Left lung (tissue), 14 donors: ENCODE measurements at regions of chr12 and their contacts with region 1.

Region 1: DNA sequence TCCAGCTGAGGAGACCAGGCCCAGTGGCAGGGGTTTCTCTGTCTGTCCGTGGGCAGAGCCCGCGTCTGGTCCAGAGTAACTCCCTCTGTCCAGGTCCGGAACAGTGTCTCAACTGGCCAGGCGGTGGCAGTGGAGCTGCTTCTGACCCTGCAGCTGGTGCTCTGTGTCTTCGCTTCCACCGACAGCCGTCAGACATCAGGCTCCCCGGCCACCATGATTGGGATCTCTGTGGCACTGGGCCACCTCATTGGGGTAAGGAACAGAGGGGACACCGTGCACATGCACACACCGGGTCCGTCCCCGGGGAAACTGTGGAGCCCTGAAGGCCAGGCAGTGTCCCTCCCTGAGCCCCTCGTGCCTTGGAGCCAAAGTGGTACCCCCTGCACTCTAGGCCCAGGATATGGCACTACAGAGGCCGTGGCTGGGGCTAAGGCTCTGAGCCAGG is 1.5 kb downstream of the AQP6 start:
- DNase-seq: peak in 2 of 4 donors; percentile 75 to 80
- ATAC-seq: peak; percentile 95
- H3K4me3 ChIP-seq: no peak overlapping the region
- H3K27ac ChIP-seq: no peak overlapping the region
- H3K4me1 ChIP-seq: peaks cover 5 to 6% of the 10 kb centered on the region in 2 donors
- H3K27me3 ChIP-seq: peaks cover 0 to 28% of the 10 kb centered on the region in 2 donors
- CTCF ChIP-seq: peak; percentile 48 to 54

Region 2: DNA sequence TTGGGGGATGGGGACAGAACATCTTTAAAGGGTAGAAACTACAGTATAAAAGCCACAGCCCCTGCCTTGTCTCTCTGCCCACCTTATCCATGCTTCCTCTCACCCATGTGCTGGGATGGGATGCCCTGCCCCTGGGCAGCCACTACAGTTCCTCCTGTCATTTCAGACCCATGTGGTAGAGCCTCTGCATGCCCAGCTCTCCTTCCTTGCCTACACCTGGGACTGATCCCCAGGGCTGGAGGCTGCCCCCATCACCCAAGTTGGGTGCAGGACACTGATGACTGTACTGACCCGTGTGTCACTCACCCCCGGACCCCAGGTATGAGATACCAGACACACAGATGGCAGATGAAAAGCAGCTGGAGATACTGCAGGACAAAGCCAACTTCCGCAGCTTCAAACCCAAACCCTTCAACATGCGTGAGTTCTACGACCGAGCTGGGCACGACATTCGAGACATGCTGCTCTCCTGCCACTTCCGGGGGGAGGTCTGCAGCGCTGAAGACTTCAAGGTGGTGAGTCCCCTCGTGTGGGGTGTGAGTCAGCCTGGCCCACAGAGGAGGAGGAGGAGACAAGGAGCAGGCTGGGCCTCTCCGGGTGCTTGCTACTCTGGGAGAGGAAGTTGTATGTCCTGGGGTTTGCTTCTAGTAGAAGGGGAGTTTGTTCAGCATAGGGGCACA is 85.3 kb after region 1 on chr12:
- intact Hi-C with region 1: loop called in 1 of 2 experiments (anchors 5 kb)
- DNase-seq: no peak
- ATAC-seq: no peak
- H3K4me3 ChIP-seq: no peak overlapping the region
- H3K27ac ChIP-seq: no peak overlapping the region
- H3K4me1 ChIP-seq: peaks cover 12 to 27% of the 10 kb centered on the region in 2 donors
- H3K27me3 ChIP-seq: peaks cover 6 to 53% of the 10 kb centered on the region in 2 donors
- CTCF ChIP-seq: no peak